CD4-positive, alpha-beta T cell (primary cell): ENCODE measurements at regions of chrX and their contacts with region 1.

Region 1: DNA sequence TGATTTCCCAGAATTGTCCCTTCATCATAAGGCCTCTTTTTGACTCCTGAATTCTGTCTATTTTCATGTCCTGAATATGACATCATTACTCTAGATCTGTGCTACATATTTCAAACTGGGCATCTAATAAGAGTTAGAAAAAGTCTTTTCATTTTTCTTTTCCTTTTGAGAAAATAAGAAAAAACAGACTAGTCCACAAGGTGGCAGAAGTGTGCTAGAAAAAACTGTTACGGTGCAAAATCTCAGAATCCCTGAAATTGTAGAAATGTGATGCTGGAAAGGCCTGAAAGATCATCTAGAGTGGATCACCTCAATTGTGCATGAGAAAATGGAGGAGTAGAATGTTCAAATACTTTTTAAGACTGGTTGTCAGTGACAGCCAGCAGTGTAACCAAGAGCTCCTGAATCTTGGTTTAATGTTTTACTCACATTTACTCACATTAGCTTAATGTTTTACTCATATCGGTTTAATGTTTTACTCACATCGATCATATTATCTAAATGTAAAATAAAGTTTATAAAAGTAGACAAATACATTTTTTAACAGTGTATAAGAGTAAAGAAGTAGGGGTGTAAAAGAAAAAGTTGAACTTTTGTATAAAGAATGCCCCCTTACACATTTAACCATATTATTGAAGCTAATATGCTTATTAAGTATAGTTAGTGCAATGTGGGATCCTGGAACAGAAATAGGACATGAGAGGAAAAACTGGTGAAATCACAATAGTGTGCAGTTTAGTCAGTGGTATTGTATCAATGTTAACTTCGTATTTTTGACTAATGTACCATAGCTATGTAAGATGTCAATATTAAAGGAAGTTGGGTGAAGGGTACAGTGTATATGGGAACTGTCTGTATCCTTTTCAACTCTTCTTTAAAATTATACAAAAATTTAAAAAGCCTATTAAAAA is 15.2 kb downstream of the ASB11 start:
- DNase-seq: peak in 3 of 14 experiments; percentile 13 to 26 (median 14)
- ATAC-seq: no peak
- H3K4me3 ChIP-seq: no peak overlapping the region
- H3K4me3 Mint-ChIP-seq: no peak overlapping the region
- H3K27ac ChIP-seq: no peak overlapping the region
- H3K27ac Mint-ChIP-seq: no peak overlapping the region
- H3K4me1 ChIP-seq: no peaks in the 10 kb centered on the region
- H3K4me1 Mint-ChIP-seq: no peaks in the 10 kb centered on the region
- H3K27me3 ChIP-seq: no peaks in the 10 kb centered on the region
- H3K27me3 Mint-ChIP-seq: no peaks in the 10 kb centered on the region
- CTCF ChIP-seq: peak; percentile 21

Region 2: GRCh38 chrX:13764765-13765164 is 1535.4 kb before region 1 on chrX:
- CTCF ChIA-PET with region 1: no interaction called
- POLR2A ChIA-PET with region 1: no interaction called
- intact Hi-C with region 1: no loop called
- DNase-seq: no peak
- ATAC-seq: no peak
- H3K4me3 ChIP-seq: no peak overlapping the region
- H3K4me3 Mint-ChIP-seq: no peak overlapping the region
- H3K27ac ChIP-seq: no peak overlapping the region
- H3K27ac Mint-ChIP-seq: no peak overlapping the region
- H3K4me1 ChIP-seq: no peaks in the 10 kb centered on the region
- H3K4me1 Mint-ChIP-seq: peaks cover 10% of the 10 kb centered on the region
- H3K27me3 ChIP-seq: no peaks in the 10 kb centered on the region
- H3K27me3 Mint-ChIP-seq: no peaks in the 10 kb centered on the region
- CTCF ChIP-seq: no peak

Region 3: DNA sequence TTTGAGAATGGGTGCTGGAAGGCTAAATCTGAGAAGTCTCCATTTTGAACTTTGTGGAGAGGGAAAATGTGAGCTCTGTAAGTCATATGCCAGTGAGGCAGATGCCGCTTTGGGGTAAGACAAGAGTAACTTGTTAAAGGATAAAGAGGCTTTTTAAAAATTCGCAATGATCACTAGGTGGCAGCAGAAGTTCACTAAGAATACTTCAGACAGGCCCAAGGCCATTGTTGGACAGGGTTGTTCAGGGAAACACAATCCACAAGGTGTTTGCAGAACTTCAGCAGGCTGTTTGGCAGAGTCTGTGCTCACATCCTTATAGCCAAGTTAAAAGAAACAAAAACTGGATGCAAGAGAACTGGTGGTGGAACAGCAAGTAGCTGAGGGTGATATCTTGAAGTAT is 48.9 kb after region 1 on chrX:
- CTCF ChIA-PET with region 1: no interaction called
- POLR2A ChIA-PET with region 1: no interaction called
- intact Hi-C with region 1: no loop called
- DNase-seq: peak in 4 of 14 experiments; percentile 9 to 60 (median 38)
- ATAC-seq: no peak
- H3K4me3 ChIP-seq: no peak overlapping the region
- H3K4me3 Mint-ChIP-seq: no peak overlapping the region
- H3K27ac ChIP-seq: no peak overlapping the region
- H3K27ac Mint-ChIP-seq: no peak overlapping the region
- H3K4me1 ChIP-seq: no peaks in the 10 kb centered on the region
- H3K4me1 Mint-ChIP-seq: no peaks in the 10 kb centered on the region
- H3K27me3 ChIP-seq: peaks cover 0 to 4% of the 10 kb centered on the region in 2 experiments
- H3K27me3 Mint-ChIP-seq: peaks cover 5% of the 10 kb centered on the region
- CTCF ChIP-seq: peak; percentile 56

Region 4: DNA sequence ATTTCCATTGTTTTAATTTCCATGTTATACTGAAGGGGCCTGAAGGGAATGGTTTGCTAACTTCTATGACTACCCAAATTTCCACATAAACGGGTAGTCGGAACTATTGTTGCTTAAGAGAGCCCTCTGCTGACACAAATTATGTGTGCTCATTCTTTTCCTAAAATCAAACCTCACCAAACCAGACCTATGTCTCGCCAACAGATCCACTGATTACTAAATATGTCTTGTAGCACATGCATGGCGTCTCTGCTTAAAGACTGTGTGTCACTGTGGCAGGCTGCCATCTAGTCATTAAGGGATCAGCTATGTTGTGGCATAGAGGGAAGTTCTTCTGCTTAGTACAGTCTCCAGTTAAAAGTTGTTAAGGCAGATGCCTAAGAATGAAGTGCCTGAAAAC is 167.8 kb after region 1 on chrX:
- CTCF ChIA-PET with region 1: no interaction called
- POLR2A ChIA-PET with region 1: no interaction called
- intact Hi-C with region 1: loop called (anchors 5 kb)
- DNase-seq: peak in 3 of 14 experiments; percentile 1 to 21 (median 14)
- ATAC-seq: no peak
- H3K4me3 ChIP-seq: no peak overlapping the region
- H3K4me3 Mint-ChIP-seq: no peak overlapping the region
- H3K27ac ChIP-seq: no peak overlapping the region
- H3K27ac Mint-ChIP-seq: no peak overlapping the region
- H3K4me1 ChIP-seq: no peaks in the 10 kb centered on the region
- H3K4me1 Mint-ChIP-seq: no peaks in the 10 kb centered on the region
- H3K27me3 ChIP-seq: no peaks in the 10 kb centered on the region
- H3K27me3 Mint-ChIP-seq: no peaks in the 10 kb centered on the region
- CTCF ChIP-seq: peak; percentile 9

Region 5: GRCh38 chrX:15475021-15475420 is 174.8 kb after region 1 on chrX:
- CTCF ChIA-PET with region 1: no interaction called
- POLR2A ChIA-PET with region 1: no interaction called
- intact Hi-C with region 1: loop called in 1 of 2 experiments (anchors 5 kb)
- DNase-seq: no peak
- ATAC-seq: no peak
- H3K4me3 ChIP-seq: no peak overlapping the region
- H3K4me3 Mint-ChIP-seq: no peak overlapping the region
- H3K27ac ChIP-seq: no peak overlapping the region
- H3K27ac Mint-ChIP-seq: no peak overlapping the region
- H3K4me1 ChIP-seq: no peaks in the 10 kb centered on the region
- H3K4me1 Mint-ChIP-seq: no peaks in the 10 kb centered on the region
- H3K27me3 ChIP-seq: no peaks in the 10 kb centered on the region
- H3K27me3 Mint-ChIP-seq: peaks cover 4% of the 10 kb centered on the region
- CTCF ChIP-seq: no peak